PC-9 (cell line): ENCODE measurements at regions of chr19 and their contacts with region 1.

Region 1: DNA sequence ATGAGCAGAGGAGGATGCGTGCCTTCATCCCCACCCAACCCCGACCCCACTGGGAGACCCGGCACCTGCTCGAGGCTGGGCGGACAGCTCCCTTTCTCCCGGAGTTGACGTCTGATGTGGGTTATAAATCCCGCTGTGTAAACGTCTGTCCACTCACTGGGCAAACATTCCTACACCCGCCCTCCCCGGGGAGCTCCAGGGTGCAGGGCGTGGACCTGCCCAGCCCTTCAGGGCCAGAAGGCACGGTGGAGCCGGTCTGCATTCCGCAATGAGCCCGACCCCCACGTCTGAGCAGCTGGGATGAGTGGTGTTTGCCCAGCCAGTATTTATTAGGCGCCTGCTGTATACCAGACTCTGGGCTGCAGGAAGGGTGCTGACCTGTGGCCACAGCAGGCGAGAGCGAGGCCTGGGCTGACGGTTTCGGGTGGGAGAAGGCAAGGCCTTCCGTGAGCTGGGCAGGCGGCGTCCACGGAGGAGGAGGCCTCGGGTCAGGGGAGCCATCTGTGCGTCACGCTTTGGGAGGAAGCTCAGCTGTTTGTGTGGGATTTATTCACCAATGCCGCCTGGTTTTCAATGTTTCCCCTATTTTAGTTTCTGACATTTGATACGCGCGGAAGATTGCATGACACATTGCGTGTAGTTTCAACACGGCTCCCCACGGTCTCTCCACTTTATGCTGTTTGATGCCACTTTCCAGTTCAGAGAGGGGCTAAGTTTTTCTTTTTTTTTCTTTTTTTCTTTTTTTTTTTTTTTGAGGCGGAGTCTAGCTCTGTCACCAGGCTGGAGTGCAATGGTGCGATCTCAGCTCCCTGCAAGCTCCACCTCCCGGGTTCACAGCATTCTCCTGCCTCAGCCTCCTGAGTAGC is 2.0 kb downstream of the MISP start:
- DNase-seq: peak; percentile 97
- H3K4me3 ChIP-seq: peak overlapping the region; percentile 48; the same call in 1 of the 2 replicates
- H3K27ac ChIP-seq: peak overlapping the region; percentile 89
- H3K4me1 ChIP-seq: peaks cover 22% of the 10 kb centered on the region
- H3K27me3 ChIP-seq: no peaks in the 10 kb centered on the region
- CTCF ChIP-seq: no peak

Region 2: GRCh38 chr19:677201-677600 is 75.7 kb before region 1 on chr19:
- CTCF ChIA-PET with region 1: interaction called, 3 read pairs
- POLR2A ChIA-PET with region 1: interaction called, 5 read pairs
- intact Hi-C with region 1: loop called (anchors 1 kb)
- DNase-seq: peak; percentile 70 to 92
- H3K4me3 ChIP-seq: peak overlapping the region; percentile 72
- H3K27ac ChIP-seq: peak overlapping the region; percentile 43; the same call in 1 of the 2 replicates
- H3K4me1 ChIP-seq: peaks cover 30% of the 10 kb centered on the region
- H3K27me3 ChIP-seq: no peaks in the 10 kb centered on the region
- CTCF ChIP-seq: no peak

Region 3: DNA sequence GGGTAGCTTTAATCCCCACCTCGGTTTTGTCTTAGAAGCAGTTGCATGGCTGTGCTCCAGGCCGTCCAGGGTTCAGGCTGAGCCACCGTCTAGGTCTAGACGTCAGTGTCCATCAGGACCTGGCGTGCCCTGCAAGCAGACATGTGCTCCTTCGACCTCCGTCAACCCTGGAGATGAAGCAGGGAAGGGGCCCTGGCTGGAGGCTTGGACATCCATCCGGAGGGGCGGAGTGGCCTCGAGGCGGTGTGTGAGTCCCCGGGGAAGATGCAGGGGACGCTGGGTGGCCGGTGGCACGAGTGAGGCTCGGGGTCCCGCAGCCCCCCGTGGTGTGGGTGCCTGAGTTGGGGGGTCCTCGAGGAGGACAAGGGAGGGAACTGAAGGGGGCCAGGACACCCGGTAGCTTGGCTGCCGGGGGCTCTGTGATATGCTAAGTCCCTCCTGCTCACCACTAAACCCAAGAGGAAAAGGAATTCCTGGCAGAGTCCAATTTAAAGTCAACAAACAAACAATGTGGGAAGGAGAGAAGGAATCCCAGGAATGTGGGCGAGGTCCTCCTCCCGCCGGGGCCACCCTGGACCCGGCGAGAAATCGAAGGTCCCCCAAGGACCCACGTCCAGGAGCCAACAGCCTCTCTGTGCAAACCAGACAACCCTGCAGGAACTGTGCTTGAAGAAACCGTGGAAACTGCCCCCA is 29.4 kb after region 1 on chr19:
- CTCF ChIA-PET with region 1: no interaction called
- POLR2A ChIA-PET with region 1: interaction called, 13 read pairs
- intact Hi-C with region 1: loop called (anchors 1 kb)
- DNase-seq: peak; percentile 74 to 79
- H3K4me3 ChIP-seq: peak overlapping the region; percentile 68
- H3K27ac ChIP-seq: peak overlapping the region; percentile 70
- H3K4me1 ChIP-seq: peaks cover 37% of the 10 kb centered on the region
- H3K27me3 ChIP-seq: no peaks in the 10 kb centered on the region
- CTCF ChIP-seq: no peak

Region 4: DNA sequence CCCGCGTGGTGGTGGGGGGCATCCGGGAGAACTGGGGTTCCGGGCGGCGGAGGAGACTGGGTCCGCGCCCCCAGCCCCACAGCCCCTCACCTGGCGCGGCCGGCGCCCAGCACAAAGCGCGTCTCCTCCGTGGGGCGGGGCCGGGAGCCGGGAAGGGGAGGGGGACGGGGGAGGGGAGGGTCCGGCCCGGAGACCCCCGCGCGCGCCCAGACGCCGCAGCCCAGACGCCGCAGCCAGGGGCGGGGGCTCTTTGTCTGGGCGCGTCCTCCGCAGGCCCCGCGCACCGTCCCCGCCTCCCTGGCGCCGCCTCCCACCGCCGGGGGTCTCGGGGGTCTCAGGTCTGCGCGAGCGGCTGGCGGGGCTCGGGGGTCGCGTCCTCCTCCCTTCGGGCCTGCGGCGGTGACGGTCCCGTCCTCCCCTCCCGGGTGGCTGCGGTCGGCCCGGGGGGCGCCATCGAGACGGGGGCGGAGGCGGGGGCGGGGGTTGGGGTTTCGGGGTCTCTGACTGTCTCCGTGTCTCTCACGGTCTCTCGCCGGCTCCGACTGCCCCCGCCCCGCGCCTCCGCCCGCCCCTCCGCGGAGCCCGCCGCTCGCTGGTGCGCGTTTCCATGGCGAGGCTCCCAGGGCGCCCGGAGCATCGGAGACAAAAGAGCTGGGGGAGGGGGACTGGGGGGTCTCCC is 69.1 kb after region 1 on chr19 and contains the start of gene PLPPR3:
- CTCF ChIA-PET with region 1: no interaction called
- POLR2A ChIA-PET with region 1: no interaction called
- intact Hi-C with region 1: no loop called
- DNase-seq: no peak
- H3K4me3 ChIP-seq: no peak within 1 kb of the TSS
- H3K27ac ChIP-seq: no peak within 1 kb of the TSS
- H3K4me1 ChIP-seq: peaks cover 6% of the 10 kb centered on the region
- H3K27me3 ChIP-seq: no peaks in the 10 kb centered on the region
- CTCF ChIP-seq: no peak
- total RNA-seq, gene PLPPR3: 0.81 and 0.90 TPM in 2 replicates

Region 5: DNA sequence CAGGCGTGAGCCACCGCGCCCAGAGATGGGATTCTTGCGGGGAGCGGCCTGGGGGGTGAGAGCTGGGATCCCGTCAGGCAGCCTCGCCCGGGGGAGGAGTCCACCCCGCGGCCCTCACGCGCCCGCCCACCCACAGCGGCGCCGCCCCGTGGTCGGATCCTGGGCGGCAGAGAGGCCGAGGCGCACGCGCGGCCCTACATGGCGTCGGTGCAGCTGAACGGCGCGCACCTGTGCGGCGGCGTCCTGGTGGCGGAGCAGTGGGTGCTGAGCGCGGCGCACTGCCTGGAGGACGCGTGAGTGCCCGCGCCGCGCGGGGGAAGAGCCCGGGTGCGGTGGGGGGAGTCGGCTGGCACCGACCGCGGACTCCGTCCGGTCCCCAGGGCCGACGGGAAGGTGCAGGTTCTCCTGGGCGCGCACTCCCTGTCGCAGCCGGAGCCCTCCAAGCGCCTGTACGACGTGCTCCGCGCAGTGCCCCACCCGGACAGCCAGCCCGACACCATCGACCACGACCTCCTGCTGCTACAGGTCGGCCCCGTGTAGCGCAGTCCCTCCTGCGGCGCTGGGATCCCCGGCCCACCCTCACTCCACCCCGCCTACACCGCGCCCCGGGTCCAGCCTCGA is 107.7 kb after region 1 on chr19:
- CTCF ChIA-PET with region 1: no interaction called
- POLR2A ChIA-PET with region 1: interaction called, 11 read pairs
- intact Hi-C with region 1: no loop called
- DNase-seq: peak; percentile 54 to 92
- H3K4me3 ChIP-seq: peak overlapping the region; percentile 39; the same call in 1 of the 2 replicates
- H3K27ac ChIP-seq: no peak overlapping the region
- H3K4me1 ChIP-seq: peaks cover 12% of the 10 kb centered on the region
- H3K27me3 ChIP-seq: no peaks in the 10 kb centered on the region
- CTCF ChIP-seq: no peak